GM12878 (cell line): ENCODE measurements at regions of chr1 and their contacts with region 1.

Region 1: DNA sequence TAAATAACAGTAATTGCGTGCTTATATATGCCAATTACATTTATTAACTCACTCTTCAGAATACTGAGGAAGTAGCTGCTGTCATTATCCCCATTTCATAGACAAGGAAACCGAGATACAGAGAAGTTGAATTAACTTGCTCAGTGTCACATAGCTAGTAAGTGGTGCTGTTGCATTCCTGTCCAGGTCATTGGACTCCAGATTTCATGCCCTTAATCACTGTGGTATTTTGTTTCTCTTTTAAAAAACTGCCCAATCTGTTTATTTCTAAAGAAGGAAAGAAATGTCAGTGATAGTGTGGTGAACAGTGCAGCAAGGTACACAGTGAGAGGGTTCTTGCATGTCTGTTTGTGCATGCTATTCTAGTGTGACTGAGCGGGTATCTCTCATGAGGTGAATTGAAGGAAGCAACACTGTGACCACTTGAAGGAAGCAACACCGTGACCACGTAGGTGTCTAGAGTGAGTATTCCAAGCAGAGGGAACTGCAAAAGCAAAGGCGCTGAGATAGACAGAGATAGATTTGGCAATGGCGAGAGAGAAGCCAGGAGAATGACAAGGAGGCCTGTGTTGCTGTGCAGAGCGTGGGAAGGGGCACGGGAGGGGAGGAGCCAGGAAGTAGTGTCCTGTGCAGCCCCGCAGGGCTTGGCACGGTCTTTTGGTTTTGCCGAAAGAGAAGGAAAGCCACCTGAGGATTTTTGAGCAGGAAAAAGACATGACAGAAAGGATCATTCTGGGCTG is 95.9 kb downstream of the CAMTA1 start:
- DNase-seq: no peak
- ATAC-seq: no peak
- H3K4me3 ChIP-seq: no peak overlapping the region
- H3K27ac ChIP-seq: no peak overlapping the region
- H3K4me1 ChIP-seq: no peaks in the 10 kb centered on the region
- H3K27me3 ChIP-seq: no peaks in the 10 kb centered on the region
- CTCF ChIP-seq: no peak
- EP300 ChIP-seq: no peak
- POLR2A ChIP-seq: no peak
- RAD21 ChIP-seq: no peak

Region 2: GRCh38 chr1:6868660-6869380 is 12.3 kb before region 1 on chr1:
- CTCF ChIA-PET with region 1: interaction called, 5 read pairs
- POLR2A ChIA-PET with region 1: no interaction called
- RAD21 ChIA-PET with region 1: no interaction called
- SMC1A ChIA-PET with region 1: interaction called, 68 read pairs
- in situ Hi-C with region 1: no loop called
- intact Hi-C with region 1: no loop called
- DNase-seq: no peak
- ATAC-seq: peak; percentile 93
- H3K4me3 ChIP-seq: no peak overlapping the region; the same call in 1 of the 2 replicates
- H3K27ac ChIP-seq: peak overlapping the region; percentile 9; the same call in 1 of the 2 replicates
- H3K4me1 ChIP-seq: peaks cover 16% of the 10 kb centered on the region
- H3K27me3 ChIP-seq: no peaks in the 10 kb centered on the region
- CTCF ChIP-seq: no peak
- EP300 ChIP-seq: no peak
- POLR2A ChIP-seq: no peak
- RAD21 ChIP-seq: no peak